Astrocyte of the cerebellum (primary cell): ENCODE measurements at regions of chr11 and their contacts with region 1.

Region 1: GRCh38 chr11:131465746-131466145 is 95.3 kb downstream of the NTM start:
- DNase-seq: no peak
- H3K4me3 ChIP-seq: no peak overlapping the region
- CTCF ChIP-seq: no peak

Region 2: GRCh38 chr11:131099013-131099412 is 366.7 kb before region 1 on chr11:
- in situ Hi-C with region 1: no loop called
- DNase-seq: no peak
- H3K4me3 ChIP-seq: no peak overlapping the region
- CTCF ChIP-seq: no peak

Region 3: DNA sequence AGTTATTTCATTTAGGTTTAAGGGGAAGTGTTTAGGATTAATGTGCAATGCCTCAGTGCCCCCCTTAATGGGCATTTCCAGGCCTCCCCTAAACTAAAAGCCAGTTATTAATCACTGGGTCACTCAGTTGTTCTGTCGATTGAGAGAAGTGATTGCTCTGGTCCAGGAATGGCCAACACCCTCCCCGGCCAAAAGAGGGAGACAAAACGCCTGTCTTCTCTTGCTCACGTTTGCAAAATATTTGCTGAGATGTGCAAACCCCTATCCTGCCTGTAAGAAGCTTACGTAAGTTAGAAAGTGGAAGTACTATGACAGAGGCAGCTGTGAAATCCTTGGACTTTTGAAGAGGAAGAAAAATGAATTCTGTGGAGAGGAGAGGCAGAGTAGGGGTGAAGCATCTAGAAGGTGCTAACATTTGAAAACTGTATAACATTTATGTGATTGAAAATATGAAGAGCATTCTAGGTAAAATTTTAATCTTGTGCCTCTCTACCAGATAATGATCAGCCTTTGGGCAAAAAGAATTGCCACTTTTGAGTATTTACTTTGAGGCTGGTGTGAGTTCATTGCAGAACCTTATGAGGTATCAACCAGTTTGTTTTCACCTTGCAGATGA is 57.6 kb before region 1 on chr11:
- in situ Hi-C with region 1: loop called (anchors 5 kb)
- DNase-seq: no peak
- H3K4me3 ChIP-seq: no peak overlapping the region
- CTCF ChIP-seq: peak; percentile 52